ENCODE measurements at regions of chr1 and their contacts with region 1.

Region 1: GRCh38 chr1:61049850-61050540 is 32.4 kb upstream of the NFIA start:
- DNase-seq: peak; percentile 96 to 98
- ATAC-seq: peak; percentile 91
- H3K4me3 ChIP-seq: peak overlapping the region; percentile 83 to 93
- H3K27ac ChIP-seq: peak overlapping the region; percentile 86 to 96
- H3K4me1 ChIP-seq: peaks cover 0 to 6% of the 10 kb centered on the region in 2 donors
- H3K27me3 ChIP-seq: no peaks in the 10 kb centered on the region

Region 2: DNA sequence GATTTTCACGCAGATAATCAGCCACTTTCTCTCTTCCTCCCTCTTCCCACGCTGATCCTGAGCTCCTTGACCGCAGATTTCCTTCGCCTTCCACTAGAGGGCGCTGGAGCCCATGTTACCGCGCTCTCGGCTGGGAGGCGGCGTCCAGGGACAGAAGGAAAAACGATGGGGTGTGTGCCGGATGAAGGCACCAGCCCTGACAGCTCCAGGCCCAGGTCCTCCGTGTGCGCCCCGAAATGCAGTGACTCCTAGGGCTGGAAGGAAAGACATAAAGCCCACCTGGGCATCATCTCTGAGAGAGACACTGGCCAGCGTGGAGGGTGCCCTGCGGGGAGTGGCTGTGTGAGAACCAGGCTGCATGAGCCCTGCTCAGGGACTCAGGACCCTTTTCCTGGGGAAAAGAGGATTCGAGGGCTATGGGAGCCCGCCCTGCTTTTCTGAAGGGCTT is 1078.5 kb before region 1 on chr1:
- intact Hi-C with region 1: loop called in 1 of 2 experiments (anchors 10 kb)
- DNase-seq: peak; percentile 78 to 91
- ATAC-seq: peak; percentile 87
- H3K4me3 ChIP-seq: no peak overlapping the region
- H3K27ac ChIP-seq: no peak overlapping the region
- H3K4me1 ChIP-seq: no peaks in the 10 kb centered on the region
- H3K27me3 ChIP-seq: no peaks in the 10 kb centered on the region

Region 3: GRCh38 chr1:61077676-61078541 is 27.9 kb after region 1 on chr1:
- intact Hi-C with region 1: loop called in 1 of 2 experiments (anchors 2 kb)
- DNase-seq: peak; percentile 92 to 96
- ATAC-seq: peak; percentile 83
- H3K4me3 ChIP-seq: peak overlapping the region; percentile 46 to 58
- H3K27ac ChIP-seq: peak overlapping the region in 1 of 2 donors; percentile 33
- H3K4me1 ChIP-seq: no peaks in the 10 kb centered on the region
- H3K27me3 ChIP-seq: no peaks in the 10 kb centered on the region

Region 4: DNA sequence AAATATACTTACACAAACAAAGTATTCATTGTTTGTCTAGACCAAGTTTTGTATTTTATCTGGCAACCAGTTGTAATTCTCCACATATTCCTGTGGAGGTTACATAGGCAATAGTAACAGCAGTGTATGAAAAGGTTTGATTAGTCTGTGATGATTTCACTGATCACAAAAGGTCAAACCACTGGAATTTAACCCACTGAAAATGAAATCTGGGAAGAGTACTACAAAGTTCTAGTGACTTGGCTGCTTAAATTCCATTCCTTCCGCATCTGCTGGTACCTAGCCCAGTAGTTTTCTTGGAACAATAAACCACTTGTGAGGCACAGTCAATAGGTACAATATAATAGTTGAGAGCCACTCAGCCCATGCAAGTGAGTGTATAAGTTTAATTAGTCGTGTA is 237.7 kb after region 1 on chr1:
- intact Hi-C with region 1: loop called in 1 of 2 experiments (anchors 2 kb)
- DNase-seq: no peak
- ATAC-seq: peak; percentile 33
- H3K4me3 ChIP-seq: no peak overlapping the region
- H3K27ac ChIP-seq: peak overlapping the region; percentile 40 to 67
- H3K4me1 ChIP-seq: peaks cover 10 to 31% of the 10 kb centered on the region in 2 donors
- H3K27me3 ChIP-seq: no peaks in the 10 kb centered on the region

Region 5: GRCh38 chr1:61453111-61453961 is 403.3 kb after region 1 on chr1:
- intact Hi-C with region 1: loop called (anchors 2 kb)
- DNase-seq: peak; percentile 93 to 94
- ATAC-seq: peak; percentile 89
- H3K4me3 ChIP-seq: no peak overlapping the region
- H3K27ac ChIP-seq: peak overlapping the region; percentile 95
- H3K4me1 ChIP-seq: peaks cover 3 to 11% of the 10 kb centered on the region in 2 donors
- H3K27me3 ChIP-seq: no peaks in the 10 kb centered on the region

Region 6: GRCh38 chr1:61741711-61742619 is 692.0 kb after region 1 on chr1 and contains the start of gene PATJ:
- intact Hi-C with region 1: loop called in 1 of 2 experiments (anchors 5 kb)
- DNase-seq: peak; percentile 64 to 87
- ATAC-seq: peak; percentile 82
- H3K4me3 ChIP-seq: peak within 1 kb of the TSS; percentile 77 to 96
- H3K27ac ChIP-seq: peak within 1 kb of the TSS; percentile 78 to 92
- H3K4me1 ChIP-seq: peaks cover 0 to 4% of the 10 kb centered on the region in 2 donors
- H3K27me3 ChIP-seq: no peaks in the 10 kb centered on the region
- total RNA-seq, gene PATJ: 36.1 to 47.1 TPM

Measured in aorta (tissue), 5 donors.